ENCODE measurements at regions of chr6 and their contacts with region 1.

Region 1: DNA sequence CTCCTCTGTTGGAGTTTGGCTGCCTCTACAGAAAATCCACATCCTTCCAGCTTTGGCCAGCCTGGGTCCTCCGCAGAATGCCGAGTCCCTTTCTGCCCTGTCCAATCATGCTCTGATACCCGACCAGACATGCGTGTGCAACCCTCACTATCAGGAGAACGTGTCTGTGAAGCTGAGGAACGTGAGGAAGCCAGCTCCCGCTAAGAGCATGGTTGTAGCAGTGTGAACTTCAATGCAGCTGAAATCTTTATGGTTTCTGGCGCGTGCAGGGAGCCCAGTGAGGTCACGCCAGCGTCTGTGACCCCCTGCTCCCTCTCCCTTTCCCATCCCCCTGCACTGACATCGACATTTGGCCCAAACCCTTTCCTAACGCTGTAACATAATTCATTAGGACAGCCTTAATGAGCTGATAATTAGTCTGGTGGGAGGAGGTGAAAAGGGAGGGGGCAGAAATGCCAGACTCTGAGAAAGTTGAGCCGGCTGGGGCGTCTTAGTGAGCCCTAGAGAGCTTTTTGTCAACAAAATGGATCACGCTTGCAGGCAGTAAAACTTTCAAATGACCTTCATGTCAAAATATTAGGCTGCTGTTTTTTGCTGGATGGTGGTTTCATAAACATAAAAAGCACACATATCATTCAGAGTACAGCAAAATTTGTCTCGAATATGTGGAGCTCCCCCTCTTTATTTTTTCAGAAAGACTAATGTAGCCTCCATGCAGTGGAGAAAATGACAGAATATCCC is 423.3 kb downstream of the QKI start:
- DNase-seq: no peak
- ATAC-seq: no peak
- H3K4me3 ChIP-seq: no peak overlapping the region
- H3K4me3 Mint-ChIP-seq: no peak overlapping the region
- H3K27ac ChIP-seq: no peak overlapping the region
- H3K27ac Mint-ChIP-seq: no peak overlapping the region
- H3K4me1 ChIP-seq: no peaks in the 10 kb centered on the region
- H3K4me1 Mint-ChIP-seq: no peaks in the 10 kb centered on the region
- H3K27me3 ChIP-seq: no peaks in the 10 kb centered on the region
- H3K27me3 Mint-ChIP-seq: peaks cover 3% of the 10 kb centered on the region
- CTCF ChIP-seq: no peak

Region 2: GRCh38 chr6:163804991-163805390 is 32.9 kb before region 1 on chr6:
- CTCF ChIA-PET with region 1: no interaction called
- POLR2A ChIA-PET with region 1: no interaction called
- intact Hi-C with region 1: loop called in 1 of 2 experiments (anchors 2 kb)
- DNase-seq: no peak
- ATAC-seq: no peak
- H3K4me3 ChIP-seq: no peak overlapping the region
- H3K4me3 Mint-ChIP-seq: no peak overlapping the region
- H3K27ac ChIP-seq: no peak overlapping the region
- H3K27ac Mint-ChIP-seq: no peak overlapping the region
- H3K4me1 ChIP-seq: no peaks in the 10 kb centered on the region
- H3K4me1 Mint-ChIP-seq: no peaks in the 10 kb centered on the region
- H3K27me3 ChIP-seq: no peaks in the 10 kb centered on the region
- H3K27me3 Mint-ChIP-seq: no peaks in the 10 kb centered on the region
- CTCF ChIP-seq: no peak